GM10248 (cell line): ENCODE measurements at regions of chr3 and their contacts with region 1.

Region 1: DNA sequence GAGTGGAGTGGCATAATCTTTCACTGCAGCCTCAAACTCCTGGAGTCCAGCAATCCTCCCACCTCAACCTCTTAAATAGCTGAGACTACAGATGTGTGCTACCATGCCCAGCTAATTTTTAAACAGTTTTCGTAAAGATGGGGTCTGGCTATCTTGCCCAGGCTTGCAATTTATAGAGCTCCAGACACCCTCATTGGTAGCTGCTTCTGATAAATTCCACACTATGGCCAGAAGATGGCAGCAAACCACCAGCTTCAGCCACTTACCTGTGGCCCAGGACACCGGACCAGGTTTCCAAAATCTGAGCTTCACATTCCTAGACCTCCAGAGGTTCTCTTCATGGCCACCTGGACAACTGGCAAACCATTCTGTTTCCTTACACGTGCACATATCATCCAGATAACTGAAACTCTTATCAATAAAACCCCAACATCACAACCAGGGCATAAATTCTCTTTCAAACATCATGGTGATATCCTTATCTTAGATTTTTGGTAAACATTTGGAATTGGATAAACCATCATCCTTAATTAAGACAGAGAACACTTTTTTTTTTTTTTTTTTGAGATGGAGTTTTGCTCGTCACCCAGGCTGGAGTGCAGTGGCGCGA is 28.9 kb downstream of the FBXW12 start:
- DNase-seq: peak; percentile 86
- CTCF ChIP-seq: peak; percentile 81

Region 2: DNA sequence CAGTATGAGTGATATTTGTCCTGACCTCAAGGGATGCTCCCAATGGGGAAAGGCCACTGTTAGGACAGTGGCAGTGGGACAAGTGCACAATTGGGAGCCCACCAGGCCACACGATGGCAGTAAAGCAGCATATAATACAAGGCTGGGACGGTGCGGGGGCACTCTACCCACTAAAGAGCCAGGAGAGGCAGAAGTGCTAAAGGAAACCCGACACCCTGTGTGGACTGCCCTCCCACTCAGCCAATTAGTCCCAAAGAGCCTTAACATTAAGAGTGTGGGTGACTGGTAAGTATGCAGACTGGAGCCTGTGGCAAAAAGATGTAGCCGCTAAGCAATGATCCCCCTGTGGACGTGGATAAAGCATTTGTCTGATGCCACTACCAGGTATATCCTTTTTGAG is 168.2 kb before region 1 on chr3:
- CTCF ChIA-PET with region 1: interaction called, 11 read pairs
- POLR2A ChIA-PET with region 1: no interaction called
- DNase-seq: peak; percentile 53
- CTCF ChIP-seq: peak; percentile 78

Region 3: DNA sequence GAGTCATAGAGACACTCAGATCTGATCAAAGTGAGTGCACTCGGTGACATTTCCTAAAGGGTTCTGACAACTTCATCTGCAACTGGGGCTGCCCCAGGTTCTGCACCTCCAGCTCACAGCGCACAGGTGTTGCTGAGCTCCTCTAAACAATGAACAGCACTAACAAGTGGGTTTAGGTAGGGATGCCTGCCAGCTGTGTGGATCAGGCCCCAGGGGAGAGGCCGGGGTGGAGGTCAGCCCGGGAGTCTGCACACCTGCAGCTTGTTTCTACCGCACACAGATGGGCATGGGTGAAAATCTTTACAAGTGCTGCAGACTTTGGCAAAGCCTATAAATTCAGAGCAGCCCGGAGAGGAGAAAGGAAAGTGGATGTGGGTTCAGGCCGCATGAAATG is 28.6 kb before region 1 on chr3:
- CTCF ChIA-PET with region 1: interaction called, 10 read pairs
- POLR2A ChIA-PET with region 1: no interaction called
- DNase-seq: no peak
- CTCF ChIP-seq: no peak

Region 4: DNA sequence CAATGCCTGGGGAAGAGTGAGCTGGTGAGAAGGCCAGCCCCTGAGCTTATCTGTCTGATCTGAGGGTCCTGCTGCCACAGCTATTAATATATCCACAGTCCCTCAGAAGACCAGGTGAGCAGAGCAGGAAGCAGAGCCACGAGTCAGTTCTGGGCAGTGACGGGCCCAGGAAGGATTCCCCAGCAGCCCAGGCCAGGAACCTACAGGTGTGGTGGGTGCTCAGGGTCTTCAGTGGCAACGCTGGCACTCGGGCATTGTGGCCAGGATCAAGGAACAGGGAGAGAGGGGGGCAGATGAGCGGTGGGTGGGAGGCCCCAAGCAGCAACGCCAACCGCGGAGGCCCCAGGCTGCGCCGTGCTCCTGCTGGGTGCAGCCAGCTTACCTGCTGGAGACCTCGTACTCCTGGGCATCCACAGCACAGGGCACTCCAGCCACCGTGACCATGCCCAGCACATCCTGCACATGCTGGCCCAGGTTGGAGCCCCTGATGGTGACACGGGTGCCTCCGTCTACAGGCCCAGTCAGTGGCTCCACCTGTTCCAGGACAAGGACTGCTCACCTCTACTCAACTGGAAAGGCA is 16.7 kb after region 1 on chr3:
- CTCF ChIA-PET with region 1: interaction called, 863 read pairs
- POLR2A ChIA-PET with region 1: no interaction called
- DNase-seq: no peak
- CTCF ChIP-seq: no peak

Region 5: GRCh38 chr3:48548729-48549705 is 148.1 kb after region 1 on chr3:
- CTCF ChIA-PET with region 1: interaction called, 36 read pairs
- POLR2A ChIA-PET with region 1: no interaction called
- DNase-seq: peak; percentile 79
- CTCF ChIP-seq: peak; percentile 83

Region 6: DNA sequence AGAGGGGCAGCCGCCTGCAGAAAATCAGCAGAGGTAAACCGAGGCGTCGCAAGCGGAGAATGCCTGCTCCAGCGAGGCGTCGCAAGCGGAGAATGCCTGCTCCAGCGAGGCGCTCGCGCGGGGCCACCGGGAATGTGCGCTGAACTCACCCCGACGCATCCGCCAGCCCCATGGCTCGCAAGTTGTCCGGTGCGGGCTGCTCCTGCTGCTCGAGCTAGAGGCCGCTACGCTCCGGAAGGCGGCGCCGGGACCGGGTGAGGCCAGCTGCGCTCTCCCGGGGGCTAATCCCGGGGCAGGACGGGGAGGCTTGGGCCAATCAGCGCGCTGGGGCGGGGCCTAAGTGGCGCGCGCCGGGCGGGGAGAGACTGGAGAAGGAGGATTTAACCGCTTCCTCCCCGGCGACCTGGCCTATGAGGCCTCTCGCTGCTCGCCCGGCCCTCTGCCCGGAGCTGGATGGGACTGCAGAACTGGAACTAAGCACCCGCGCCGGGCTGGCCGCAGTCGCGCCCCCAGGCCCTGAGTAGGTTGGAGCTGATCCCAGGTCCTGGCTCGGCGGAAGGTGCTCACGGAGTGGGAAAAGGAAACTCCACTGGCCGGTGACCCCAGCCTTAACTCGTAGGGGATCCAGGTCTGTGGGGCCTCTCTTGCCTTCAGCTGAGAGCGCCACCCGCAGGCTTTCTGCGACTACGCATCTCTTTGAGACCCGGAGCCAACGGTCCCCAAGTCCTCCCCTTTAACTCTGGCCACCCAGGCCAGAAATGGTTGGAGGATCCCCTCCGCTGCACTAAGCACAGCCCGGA is 234.5 kb after region 1 on chr3 and contains the start of gene SLC26A6:
- CTCF ChIA-PET with region 1: interaction called, 16 read pairs
- POLR2A ChIA-PET with region 1: no interaction called
- DNase-seq: peak; percentile 100
- CTCF ChIP-seq: peak; percentile 74